ENCODE measurements at regions of chr1 and their contacts with region 1.

Region 1: DNA sequence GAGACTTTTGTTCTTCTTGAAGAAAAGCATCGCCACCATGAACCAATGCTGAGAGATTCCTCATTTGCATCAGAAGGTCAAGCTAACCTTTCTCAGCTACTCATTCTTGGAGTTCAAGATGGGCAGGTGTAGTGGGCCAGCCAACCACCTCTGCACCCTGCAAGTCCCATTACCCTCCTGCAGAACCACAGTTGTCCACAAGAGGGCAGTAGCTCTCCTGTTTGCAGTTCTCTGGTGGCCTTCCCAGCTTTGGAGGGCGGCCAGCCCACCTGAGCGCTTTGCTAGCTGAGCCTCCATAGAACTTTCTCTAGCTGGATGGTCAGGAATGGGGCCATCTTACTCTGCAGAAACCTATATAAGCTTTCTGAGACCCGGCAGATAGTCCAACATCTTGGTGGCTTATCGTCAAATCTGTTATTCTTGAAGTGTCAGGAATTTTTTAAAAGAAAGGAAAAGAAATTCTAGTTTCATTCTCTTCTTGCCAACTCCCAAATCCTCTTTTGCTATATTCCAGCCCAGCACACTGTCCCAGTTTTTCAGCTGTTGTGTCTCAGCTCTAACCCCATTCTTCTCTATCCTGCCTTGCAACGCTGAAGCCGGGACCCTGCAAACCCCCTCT is 11.0 kb upstream of the LMX1A start:
- DNase-seq: peak; percentile 84
- H3K4me3 Mint-ChIP-seq: no peak overlapping the region
- H3K27ac Mint-ChIP-seq: no peak overlapping the region
- H3K4me1 Mint-ChIP-seq: peaks cover 2% of the 10 kb centered on the region
- H3K27me3 Mint-ChIP-seq: peaks cover 75% of the 10 kb centered on the region

Region 2: GRCh38 chr1:165279882-165280281 is 87.6 kb before region 1 on chr1:
- CTCF ChIA-PET with region 1: no interaction called
- DNase-seq: no peak
- H3K4me3 Mint-ChIP-seq: no peak overlapping the region
- H3K27ac Mint-ChIP-seq: no peak overlapping the region
- H3K4me1 Mint-ChIP-seq: no peaks in the 10 kb centered on the region
- H3K27me3 Mint-ChIP-seq: peaks cover 14% of the 10 kb centered on the region

Region 3: DNA sequence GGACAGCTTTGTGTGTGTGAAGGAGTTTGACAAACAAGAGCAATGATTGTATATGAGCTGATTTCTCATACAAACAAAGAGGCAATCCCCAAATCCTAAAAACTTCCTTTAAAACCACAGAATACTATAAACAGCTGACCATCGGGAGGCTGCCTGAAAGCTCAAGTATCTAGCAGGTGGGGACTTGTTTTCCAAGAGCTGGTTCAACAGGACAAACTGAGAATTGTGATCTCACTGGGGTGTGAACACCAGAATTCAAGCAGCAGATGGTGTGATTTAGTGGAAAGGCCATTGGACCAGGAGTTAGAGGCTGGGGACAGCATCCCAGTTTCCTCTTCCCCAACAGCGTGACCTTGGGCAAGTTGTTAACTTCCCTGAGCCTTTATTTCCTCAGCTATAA is 24.9 kb before region 1 on chr1:
- CTCF ChIA-PET with region 1: interaction called, 12 read pairs
- DNase-seq: no peak
- H3K4me3 Mint-ChIP-seq: no peak overlapping the region
- H3K27ac Mint-ChIP-seq: no peak overlapping the region
- H3K4me1 Mint-ChIP-seq: no peaks in the 10 kb centered on the region
- H3K27me3 Mint-ChIP-seq: peaks cover 29% of the 10 kb centered on the region

Region 4: DNA sequence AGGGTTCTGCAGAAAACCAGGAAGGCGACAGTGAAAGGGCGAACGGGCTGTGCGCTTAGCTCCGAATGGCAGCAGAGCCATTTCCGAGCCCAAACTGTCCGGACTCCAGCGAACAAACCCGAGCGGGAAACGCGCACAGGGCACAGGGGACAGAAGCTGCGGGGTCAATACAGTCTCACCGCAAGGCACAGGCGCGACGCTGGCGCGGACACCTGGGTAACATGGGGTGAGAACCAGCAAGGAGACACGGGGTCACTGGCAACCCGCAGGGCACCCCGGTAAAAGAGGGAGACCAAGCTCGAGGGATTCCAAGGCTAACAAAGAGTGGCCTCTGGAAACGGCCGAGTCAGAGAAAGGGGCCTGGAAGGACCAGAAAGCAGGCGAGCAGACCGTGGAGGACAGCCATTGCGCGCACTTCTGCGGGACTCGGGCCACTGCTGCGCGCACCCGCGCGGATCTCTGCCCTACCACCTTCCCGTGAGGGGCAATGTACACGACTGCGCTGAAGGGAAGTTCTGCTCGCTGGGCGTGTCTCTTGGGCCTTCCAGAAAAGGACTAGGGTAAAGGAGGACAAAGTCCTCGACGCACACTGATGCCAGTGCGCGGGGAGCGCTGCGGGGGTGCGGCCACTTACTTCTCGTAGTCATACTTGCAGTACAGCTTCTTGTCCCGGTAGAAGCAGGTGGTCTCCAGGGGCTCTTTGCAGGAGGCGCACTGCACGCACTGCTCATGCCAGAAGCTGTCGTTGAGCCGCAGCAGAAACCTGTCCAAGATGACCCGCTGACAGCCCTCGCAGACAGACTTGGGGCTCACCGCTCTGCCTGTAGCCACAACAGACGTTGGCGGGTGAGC is 14.8 kb before region 1 on chr1:
- CTCF ChIA-PET with region 1: interaction called, 30 read pairs
- DNase-seq: no peak
- H3K4me3 Mint-ChIP-seq: no peak overlapping the region
- H3K27ac Mint-ChIP-seq: peak overlapping the region; percentile 76
- H3K4me1 Mint-ChIP-seq: peaks cover 7% of the 10 kb centered on the region
- H3K27me3 Mint-ChIP-seq: peaks cover 91% of the 10 kb centered on the region

Region 5: GRCh38 chr1:165383067-165383466 is 15.6 kb after region 1 on chr1:
- CTCF ChIA-PET with region 1: interaction called, 27 read pairs
- DNase-seq: no peak
- H3K4me3 Mint-ChIP-seq: no peak overlapping the region
- H3K27ac Mint-ChIP-seq: no peak overlapping the region
- H3K4me1 Mint-ChIP-seq: no peaks in the 10 kb centered on the region
- H3K27me3 Mint-ChIP-seq: peaks cover 82% of the 10 kb centered on the region

Region 6: GRCh38 chr1:165392634-165393571 is 25.4 kb after region 1 on chr1:
- CTCF ChIA-PET with region 1: interaction called, 32 read pairs
- DNase-seq: peak; percentile 95
- H3K4me3 Mint-ChIP-seq: peak overlapping the region; percentile 57
- H3K27ac Mint-ChIP-seq: peak overlapping the region; percentile 85
- H3K4me1 Mint-ChIP-seq: peaks cover 23% of the 10 kb centered on the region
- H3K27me3 Mint-ChIP-seq: peaks cover 98% of the 10 kb centered on the region

Region 7: GRCh38 chr1:165416876-165417275 is 49.4 kb after region 1 on chr1:
- CTCF ChIA-PET with region 1: no interaction called
- DNase-seq: no peak
- H3K4me3 Mint-ChIP-seq: no peak overlapping the region
- H3K27ac Mint-ChIP-seq: no peak overlapping the region
- H3K4me1 Mint-ChIP-seq: no peaks in the 10 kb centered on the region
- H3K27me3 Mint-ChIP-seq: peaks cover 28% of the 10 kb centered on the region

Region 8: GRCh38 chr1:165580941-165581871 is 213.7 kb after region 1 on chr1:
- CTCF ChIA-PET with region 1: interaction called, 13 read pairs
- DNase-seq: no peak
- H3K4me3 Mint-ChIP-seq: no peak overlapping the region
- H3K27ac Mint-ChIP-seq: no peak overlapping the region
- H3K4me1 Mint-ChIP-seq: no peaks in the 10 kb centered on the region
- H3K27me3 Mint-ChIP-seq: peaks cover 28% of the 10 kb centered on the region

Region 9: DNA sequence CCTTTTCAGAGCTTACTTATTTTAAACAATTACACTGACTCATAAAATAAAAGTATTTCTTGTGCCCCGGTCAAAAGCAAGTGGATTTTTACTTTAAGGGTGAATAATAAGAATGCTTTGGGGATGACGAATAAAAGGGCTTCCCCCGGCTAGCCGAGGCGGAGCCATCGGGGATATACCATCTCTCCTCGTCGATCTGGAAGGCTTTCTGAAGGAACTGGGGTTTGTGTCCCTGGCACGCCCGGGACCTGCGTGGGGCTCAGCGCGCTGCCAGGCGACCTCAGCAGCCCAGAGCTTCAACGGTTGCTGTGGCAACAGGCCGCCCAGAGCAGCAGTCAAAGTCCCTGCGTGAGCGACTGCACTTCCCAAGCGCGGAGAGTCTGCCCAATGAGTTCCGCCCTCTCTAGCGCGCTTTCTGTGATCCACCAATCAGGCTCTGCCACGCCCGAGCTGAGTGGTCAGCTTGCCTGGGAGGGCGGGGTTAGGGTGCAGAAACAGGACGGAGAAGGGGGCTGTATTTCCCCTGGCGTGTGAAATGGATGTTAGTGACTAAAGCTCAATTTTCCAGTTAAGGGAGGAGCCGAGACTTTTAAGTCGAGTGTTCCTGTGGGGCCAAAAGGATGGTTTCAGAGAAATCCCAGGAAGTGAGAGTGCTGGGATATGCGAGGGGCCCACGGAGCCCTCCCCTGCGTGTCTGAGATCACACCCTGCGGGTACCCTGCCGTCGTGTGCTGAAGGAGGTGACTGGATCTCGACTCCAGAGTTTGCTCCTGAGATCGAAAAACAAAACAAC is 230.6 kb after region 1 on chr1:
- CTCF ChIA-PET with region 1: interaction called, 21 read pairs
- DNase-seq: peak; percentile 94
- H3K4me3 Mint-ChIP-seq: peak overlapping the region; percentile 83
- H3K27ac Mint-ChIP-seq: peak overlapping the region; percentile 39
- H3K4me1 Mint-ChIP-seq: peaks cover 26% of the 10 kb centered on the region
- H3K27me3 Mint-ChIP-seq: peaks cover 65% of the 10 kb centered on the region